ENCODE measurements at regions of chr22 and their contacts with region 1.

Region 1: GRCh38 chr22:35231585-35232084 is 25.7 kb upstream of the HMGXB4 start:
- H3K4me3 ChIP-seq: no peak overlapping the region
- H3K27ac ChIP-seq: no peak overlapping the region
- H3K4me1 ChIP-seq: no peaks in the 10 kb centered on the region
- CTCF ChIP-seq: peak; percentile 80

Region 2: DNA sequence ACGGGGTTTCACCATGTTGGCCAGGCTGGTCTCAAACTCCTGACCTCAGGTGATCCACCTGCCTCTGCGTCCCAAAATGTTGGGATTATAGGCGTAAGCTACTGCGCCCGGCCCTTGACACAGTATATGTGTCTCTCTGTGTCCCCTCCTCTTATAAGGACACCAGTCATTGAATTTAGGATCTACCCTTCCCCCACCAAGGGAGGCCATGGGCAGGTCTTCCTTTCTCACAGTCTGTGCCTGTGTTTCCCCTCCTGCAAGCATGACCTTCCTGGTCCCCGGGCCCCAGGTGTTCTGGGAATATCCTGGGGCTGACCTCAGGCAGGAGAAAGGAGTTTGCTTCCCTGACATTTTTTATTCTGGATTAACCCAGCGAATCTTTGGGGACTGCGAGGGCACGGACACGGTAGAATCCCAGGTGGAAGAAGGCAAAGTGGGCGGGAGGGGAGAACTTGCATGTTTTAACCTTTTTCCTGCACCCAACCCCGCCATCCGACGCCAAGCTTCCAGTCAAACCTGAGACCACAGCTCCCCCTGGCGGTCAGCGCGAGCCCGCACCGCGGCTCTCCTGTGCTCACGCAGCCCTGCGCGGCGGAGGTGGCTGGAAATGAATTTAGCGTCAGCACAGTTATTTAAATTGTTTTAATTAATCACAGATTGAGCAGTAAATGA is 207.8 kb before region 1 on chr22:
- CTCF ChIA-PET with region 1: interaction called, 11 read pairs
- POLR2A ChIA-PET with region 1: no interaction called
- H3K4me3 ChIP-seq: no peak overlapping the region
- H3K27ac ChIP-seq: no peak overlapping the region
- H3K4me1 ChIP-seq: no peaks in the 10 kb centered on the region
- CTCF ChIP-seq: peak; percentile 60

Region 3: DNA sequence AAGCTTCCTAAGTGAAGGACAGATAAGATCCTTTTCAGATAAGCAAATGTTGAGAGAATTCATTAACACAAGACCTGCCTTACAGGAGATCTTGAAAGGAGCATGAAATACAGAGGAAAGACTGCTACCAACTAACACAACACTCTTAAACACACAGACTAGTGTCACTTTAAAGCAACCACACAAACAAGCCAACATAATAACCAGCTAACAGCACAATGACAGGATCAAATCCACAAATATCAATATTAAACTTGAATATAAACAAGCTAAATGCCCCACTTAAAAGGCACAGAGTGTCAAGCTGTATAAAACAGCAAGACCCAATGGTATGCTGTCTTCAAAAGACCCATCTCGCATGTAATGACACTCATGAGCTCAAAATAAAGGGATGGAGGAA is 45.1 kb before region 1 on chr22:
- CTCF ChIA-PET with region 1: interaction called, 10 read pairs
- POLR2A ChIA-PET with region 1: no interaction called
- H3K4me3 ChIP-seq: no peak overlapping the region
- H3K27ac ChIP-seq: no peak overlapping the region
- H3K4me1 ChIP-seq: no peaks in the 10 kb centered on the region
- CTCF ChIP-seq: no peak

Region 4: GRCh38 chr22:35205961-35206360 is 25.7 kb before region 1 on chr22:
- CTCF ChIA-PET with region 1: interaction called, 16 read pairs
- POLR2A ChIA-PET with region 1: interaction called, 5 read pairs
- H3K4me3 ChIP-seq: no peak overlapping the region
- H3K27ac ChIP-seq: no peak overlapping the region
- H3K4me1 ChIP-seq: no peaks in the 10 kb centered on the region
- CTCF ChIP-seq: no peak

Region 5: GRCh38 chr22:35212009-35212408 is 19.6 kb before region 1 on chr22:
- CTCF ChIA-PET with region 1: interaction called, 68 read pairs
- POLR2A ChIA-PET with region 1: no interaction called
- H3K4me3 ChIP-seq: no peak overlapping the region
- H3K27ac ChIP-seq: no peak overlapping the region
- H3K4me1 ChIP-seq: no peaks in the 10 kb centered on the region
- CTCF ChIP-seq: no peak

Region 6: GRCh38 chr22:35219012-35219411 is 12.6 kb before region 1 on chr22:
- CTCF ChIA-PET with region 1: interaction called, 68 read pairs
- POLR2A ChIA-PET with region 1: no interaction called
- H3K4me3 ChIP-seq: no peak overlapping the region
- H3K27ac ChIP-seq: no peak overlapping the region
- H3K4me1 ChIP-seq: no peaks in the 10 kb centered on the region
- CTCF ChIP-seq: no peak

Region 7: DNA sequence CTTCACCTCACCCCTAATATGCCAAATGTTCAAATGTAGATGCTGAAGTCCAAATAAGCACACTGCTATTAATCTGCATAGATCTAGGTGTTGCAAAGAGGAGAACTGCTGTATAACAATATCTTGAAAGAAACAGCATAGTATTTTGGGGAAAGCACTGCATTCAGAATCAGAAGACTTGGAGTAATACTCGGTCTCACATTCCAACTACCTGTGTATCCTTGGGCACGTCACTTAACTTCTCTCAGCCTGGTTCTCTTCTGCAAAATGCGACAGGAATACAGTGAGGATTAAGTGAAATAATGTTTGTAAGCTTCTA is 25.3 kb after region 1 on chr22:
- CTCF ChIA-PET with region 1: interaction called, 13 read pairs
- POLR2A ChIA-PET with region 1: interaction called, 3 read pairs
- H3K4me3 ChIP-seq: peak overlapping the region; percentile 82
- H3K27ac ChIP-seq: peak overlapping the region; percentile 94
- H3K4me1 ChIP-seq: no peaks in the 10 kb centered on the region
- CTCF ChIP-seq: no peak

Region 8: DNA sequence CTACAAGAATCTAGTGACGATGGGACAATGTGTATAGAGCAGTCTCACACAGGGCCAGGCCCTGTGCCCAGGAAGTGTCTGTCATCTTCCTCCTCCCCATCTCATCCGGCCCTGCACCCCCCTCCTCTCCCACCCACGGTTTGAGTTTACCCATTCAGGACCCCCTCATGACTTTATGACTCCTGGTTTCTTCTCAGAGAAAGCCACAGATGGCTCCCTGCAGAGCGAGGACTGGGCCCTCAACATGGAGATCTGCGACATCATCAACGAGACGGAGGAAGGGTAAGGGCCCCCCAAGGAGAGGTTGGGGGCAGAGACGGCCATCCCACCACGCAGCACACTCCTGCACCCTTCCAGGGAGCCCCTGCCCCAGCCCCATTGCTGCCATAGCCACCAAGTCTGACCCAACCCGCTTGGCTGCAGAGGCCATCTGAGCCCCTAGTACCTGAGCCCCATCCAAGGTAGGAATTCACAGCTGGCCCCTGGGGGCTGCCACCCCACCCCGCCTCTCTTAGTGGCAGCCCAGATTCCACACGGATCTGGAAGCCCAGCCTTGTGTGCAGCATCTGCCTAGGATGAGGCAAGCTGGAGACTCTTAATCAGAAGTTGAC is 86.2 kb after region 1 on chr22:
- CTCF ChIA-PET with region 1: no interaction called
- POLR2A ChIA-PET with region 1: no interaction called
- H3K4me3 ChIP-seq: no peak overlapping the region
- H3K27ac ChIP-seq: no peak overlapping the region
- H3K4me1 ChIP-seq: 0 out of 2 replicates have a peak, but pooled peaks cover 4% of the 10 kb centered on the region
- CTCF ChIP-seq: no peak